GM10248 (cell line): ENCODE measurements at regions of chr3 and their contacts with region 1.

Region 1: GRCh38 chr3:125675791-125676190 is 80.5 kb upstream of the OSBPL11 start:
- DNase-seq: no peak
- CTCF ChIP-seq: no peak

Region 2: GRCh38 chr3:125662675-125663074 is 13.1 kb before region 1 on chr3:
- CTCF ChIA-PET with region 1: interaction called, 13 read pairs
- POLR2A ChIA-PET with region 1: no interaction called
- DNase-seq: no peak
- CTCF ChIP-seq: no peak